Activated CD4-positive, alpha-beta memory T cell treated with anti-CD3 and anti-CD28 coated beads for 36 hours (primary cell): ENCODE measurements at regions of chr3 and their contacts with region 1.

Region 1: DNA sequence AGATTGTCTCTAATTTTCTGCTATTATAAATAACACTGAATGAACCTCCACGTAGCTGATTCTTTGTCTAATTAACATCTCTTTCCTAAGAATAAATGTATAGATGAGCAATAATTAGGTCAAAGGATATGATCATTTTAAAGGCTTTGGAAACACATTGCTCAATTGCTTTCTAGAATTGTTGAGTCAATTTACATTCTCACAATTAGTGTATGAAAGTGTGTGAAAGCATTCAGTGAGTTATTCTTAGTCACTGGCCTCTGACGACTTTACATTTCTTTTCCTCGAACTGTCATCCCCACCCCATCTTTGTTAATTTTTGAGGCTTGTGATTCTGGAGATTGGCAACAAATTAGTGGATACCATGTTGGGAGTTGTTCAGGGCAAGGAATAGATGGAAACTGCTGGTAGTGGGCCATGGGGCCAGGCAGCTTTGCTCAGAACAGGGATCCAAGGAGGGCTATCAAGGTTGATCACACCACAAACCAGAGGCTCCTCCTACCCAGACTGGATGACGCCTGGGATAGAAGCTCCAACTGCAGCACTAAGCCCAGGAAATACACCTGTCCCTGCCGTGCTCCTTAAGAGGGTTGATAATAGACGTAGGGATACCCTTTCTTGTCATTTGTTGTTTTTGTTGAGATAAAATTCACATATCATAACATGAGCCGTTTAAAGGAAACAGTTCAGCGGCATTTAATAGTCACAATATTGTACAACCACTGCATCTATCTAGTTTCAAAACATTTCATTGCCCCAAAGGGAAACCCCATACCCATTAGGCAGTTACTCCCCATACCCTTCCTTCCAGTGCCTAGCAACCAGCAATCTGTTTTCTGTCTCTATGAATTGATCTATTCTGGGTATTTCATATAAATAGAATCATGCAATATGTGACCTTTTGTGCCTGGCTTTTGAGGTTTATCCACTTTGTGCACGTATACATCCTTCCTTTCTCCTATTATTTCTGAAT is 27.9 kb downstream of the EIF1B start:
- DNase-seq: peak; percentile 40
- H3K4me3 Mint-ChIP-seq: peak overlapping the region; percentile 12
- H3K27ac Mint-ChIP-seq: peak overlapping the region; percentile 68
- H3K4me1 Mint-ChIP-seq: peaks cover 20% of the 10 kb centered on the region
- H3K27me3 Mint-ChIP-seq: peaks cover 5% of the 10 kb centered on the region

Region 2: DNA sequence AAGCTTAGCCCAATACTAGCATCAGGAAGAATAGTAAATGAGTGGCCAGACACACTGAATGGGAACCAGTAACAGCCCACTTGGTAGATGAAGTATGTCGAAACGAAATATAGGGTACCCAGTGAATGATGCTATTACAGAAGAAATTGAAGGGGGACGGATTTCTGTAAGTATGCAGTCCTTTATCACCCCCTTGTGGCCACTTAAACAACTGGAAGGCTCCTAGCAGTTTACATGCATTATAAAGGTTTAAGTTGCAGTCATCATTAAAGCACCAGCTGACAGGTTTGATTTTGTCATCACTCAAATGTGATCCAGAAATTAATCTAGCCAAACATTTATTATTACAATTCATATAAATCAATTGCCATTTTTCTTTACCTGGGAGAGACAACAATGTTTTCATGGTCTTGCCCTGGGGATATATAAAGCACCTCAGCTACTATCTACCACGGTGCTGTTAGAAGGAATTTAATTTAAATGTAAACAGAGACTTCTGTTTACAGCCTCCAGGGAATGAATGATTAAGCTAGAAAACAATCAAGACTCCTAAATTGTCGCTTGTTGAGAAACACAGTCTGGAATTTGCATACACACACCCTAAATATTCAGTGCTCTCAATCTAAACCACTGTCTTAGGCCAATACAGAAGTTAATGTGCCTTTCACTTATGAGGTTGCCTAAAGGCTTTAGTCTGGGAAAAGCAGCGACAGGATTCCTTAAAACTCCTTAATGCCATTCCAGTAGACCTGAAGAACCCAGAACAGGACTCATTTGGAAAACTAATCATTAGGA is 20.2 kb before region 1 on chr3:
- CTCF ChIA-PET with region 1: interaction called, 12 read pairs
- POLR2A ChIA-PET with region 1: no interaction called
- intact Hi-C with region 1: no loop called
- DNase-seq: peak; percentile 31
- H3K4me3 Mint-ChIP-seq: no peak overlapping the region
- H3K27ac Mint-ChIP-seq: no peak overlapping the region
- H3K4me1 Mint-ChIP-seq: peaks cover 4% of the 10 kb centered on the region
- H3K27me3 Mint-ChIP-seq: no peaks in the 10 kb centered on the region

Region 3: GRCh38 chr3:40452876-40453730 is 115.7 kb after region 1 on chr3:
- CTCF ChIA-PET with region 1: no interaction called
- POLR2A ChIA-PET with region 1: interaction called, 3 read pairs
- intact Hi-C with region 1: loop called (anchors 1 kb)
- DNase-seq: peak; percentile 98
- H3K4me3 Mint-ChIP-seq: peak overlapping the region; percentile 93
- H3K27ac Mint-ChIP-seq: peak overlapping the region; percentile 96
- H3K4me1 Mint-ChIP-seq: peaks cover 32% of the 10 kb centered on the region
- H3K27me3 Mint-ChIP-seq: peaks cover 1% of the 10 kb centered on the region

Region 4: GRCh38 chr3:40524568-40525285 is 187.3 kb after region 1 on chr3 and contains the start of gene ZNF621:
- CTCF ChIA-PET with region 1: no interaction called
- POLR2A ChIA-PET with region 1: no interaction called
- intact Hi-C with region 1: loop called (anchors 5 kb)
- DNase-seq: peak; percentile 88
- H3K4me3 Mint-ChIP-seq: peak within 1 kb of the TSS; percentile 91
- H3K27ac Mint-ChIP-seq: peak within 1 kb of the TSS; percentile 84
- H3K4me1 Mint-ChIP-seq: peaks cover 23% of the 10 kb centered on the region
- H3K27me3 Mint-ChIP-seq: no peaks in the 10 kb centered on the region
- total RNA-seq, gene ZNF621: 19.7 to 22.3 TPM

Region 5: GRCh38 chr3:41190509-41191284 is 853.3 kb after region 1 on chr3:
- CTCF ChIA-PET with region 1: no interaction called
- POLR2A ChIA-PET with region 1: no interaction called
- intact Hi-C with region 1: loop called (anchors 1 kb)
- DNase-seq: peak; percentile 21
- H3K4me3 Mint-ChIP-seq: no peak overlapping the region
- H3K27ac Mint-ChIP-seq: no peak overlapping the region
- H3K4me1 Mint-ChIP-seq: peaks cover 29% of the 10 kb centered on the region
- H3K27me3 Mint-ChIP-seq: peaks cover 3% of the 10 kb centered on the region

Region 6: DNA sequence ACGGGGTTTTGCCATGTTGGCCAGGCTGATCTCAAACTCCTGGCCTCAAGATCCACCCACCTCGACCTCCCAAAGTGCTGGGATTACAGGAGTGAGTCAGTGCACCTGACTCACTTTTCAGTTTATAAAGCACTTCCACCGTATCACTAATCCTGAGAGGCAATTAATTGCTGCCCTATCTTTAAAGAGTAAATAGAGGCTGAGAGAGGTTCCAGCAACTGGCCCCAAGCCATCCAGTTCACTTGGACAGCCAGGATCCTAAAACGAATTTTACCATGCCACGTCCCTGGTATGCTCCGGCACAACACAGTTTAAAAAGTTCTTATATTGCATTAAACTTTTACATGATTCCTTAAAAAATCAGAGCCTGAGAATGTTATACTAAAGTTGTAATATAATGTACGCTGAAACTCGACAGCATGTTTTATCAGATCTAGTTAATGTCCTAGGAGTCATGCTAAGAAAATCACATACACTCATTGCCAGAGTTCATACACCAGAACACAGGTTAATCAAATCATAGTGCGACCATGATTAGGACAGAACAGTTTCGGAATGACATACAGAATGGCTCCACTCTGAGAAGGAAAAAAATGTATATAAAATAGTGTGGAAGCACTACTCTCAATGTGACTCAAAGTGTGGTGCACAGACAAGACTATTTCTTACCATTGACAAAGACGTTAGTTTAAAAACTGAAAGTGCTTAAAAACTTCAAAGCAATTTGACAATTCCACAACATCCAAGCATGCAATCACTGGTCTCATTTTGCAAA is 1499.1 kb after region 1 on chr3:
- CTCF ChIA-PET with region 1: no interaction called
- POLR2A ChIA-PET with region 1: no interaction called
- intact Hi-C with region 1: loop called (anchors 1 kb)
- DNase-seq: peak; percentile 36
- H3K4me3 Mint-ChIP-seq: no peak overlapping the region
- H3K27ac Mint-ChIP-seq: peak overlapping the region; percentile 64
- H3K4me1 Mint-ChIP-seq: peaks cover 17% of the 10 kb centered on the region
- H3K27me3 Mint-ChIP-seq: peaks cover 1% of the 10 kb centered on the region